ENCODE measurements at regions of chr16 and their contacts with region 1.

Region 1: DNA sequence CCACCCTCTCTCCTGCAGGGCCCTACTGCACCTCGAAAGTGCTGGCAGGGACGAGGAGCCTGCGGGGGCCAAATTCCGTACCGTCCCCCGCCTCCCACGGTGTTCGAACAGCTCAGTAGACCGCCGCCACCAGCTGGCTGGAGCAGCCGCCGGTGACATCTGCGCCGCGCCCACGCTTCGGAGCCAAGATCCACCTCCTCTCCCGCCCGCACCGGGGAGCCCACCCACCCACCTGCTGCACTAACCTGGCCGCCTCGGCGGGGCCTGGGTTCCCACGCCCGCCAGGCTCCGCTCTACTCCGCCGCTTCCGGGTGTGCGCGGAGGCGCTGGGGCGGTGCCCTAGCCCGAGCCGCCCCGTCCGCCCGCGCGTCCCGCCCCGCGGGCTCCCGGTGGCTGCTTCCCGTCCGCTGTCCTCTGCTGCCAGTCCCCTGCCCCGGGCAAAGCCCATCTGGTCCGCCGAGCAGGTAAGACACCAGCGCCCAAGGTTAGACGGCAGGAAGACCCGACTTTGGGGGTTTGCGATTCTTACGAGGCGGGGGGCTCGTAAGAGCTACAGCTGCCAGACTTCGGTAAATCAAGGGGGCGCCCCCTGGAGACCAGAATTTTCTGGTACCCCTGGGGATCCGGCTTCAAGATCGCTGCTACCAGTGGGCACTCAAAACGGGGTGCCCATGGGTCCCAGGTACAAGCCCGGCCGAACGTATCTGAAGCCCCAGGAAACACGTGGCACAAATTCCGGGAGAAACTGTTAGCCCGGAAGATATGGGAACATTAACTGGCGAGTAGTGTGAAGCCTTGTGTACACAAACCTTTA is at the starts of genes FBXL8 and TRADD:
- DNase-seq: no peak
- H3K4me3 ChIP-seq: peak within 1 kb of the TSS; percentile 62 to 83 (median 76)
- H3K27ac ChIP-seq: peak within 1 kb of the TSS; percentile 89 to 95 (median 91)
- H3K4me1 ChIP-seq: peaks cover 50 to 94% (median 56%) of the 10 kb centered on the region in 3 donors
- H3K27me3 ChIP-seq: peaks cover 0 to 31% (median 0%) of the 10 kb centered on the region in 4 donors
- CTCF ChIP-seq: peak; percentile 12 to 35 (median 32)
- POLR2A ChIP-seq: peak in 2 of 4 donors; percentile 84 to 93
- total RNA-seq, gene FBXL8: 10.0 to 34.5 (median 19.9) TPM
- total RNA-seq, gene TRADD: 27.7 to 39.8 (median 35.5) TPM

Region 2: DNA sequence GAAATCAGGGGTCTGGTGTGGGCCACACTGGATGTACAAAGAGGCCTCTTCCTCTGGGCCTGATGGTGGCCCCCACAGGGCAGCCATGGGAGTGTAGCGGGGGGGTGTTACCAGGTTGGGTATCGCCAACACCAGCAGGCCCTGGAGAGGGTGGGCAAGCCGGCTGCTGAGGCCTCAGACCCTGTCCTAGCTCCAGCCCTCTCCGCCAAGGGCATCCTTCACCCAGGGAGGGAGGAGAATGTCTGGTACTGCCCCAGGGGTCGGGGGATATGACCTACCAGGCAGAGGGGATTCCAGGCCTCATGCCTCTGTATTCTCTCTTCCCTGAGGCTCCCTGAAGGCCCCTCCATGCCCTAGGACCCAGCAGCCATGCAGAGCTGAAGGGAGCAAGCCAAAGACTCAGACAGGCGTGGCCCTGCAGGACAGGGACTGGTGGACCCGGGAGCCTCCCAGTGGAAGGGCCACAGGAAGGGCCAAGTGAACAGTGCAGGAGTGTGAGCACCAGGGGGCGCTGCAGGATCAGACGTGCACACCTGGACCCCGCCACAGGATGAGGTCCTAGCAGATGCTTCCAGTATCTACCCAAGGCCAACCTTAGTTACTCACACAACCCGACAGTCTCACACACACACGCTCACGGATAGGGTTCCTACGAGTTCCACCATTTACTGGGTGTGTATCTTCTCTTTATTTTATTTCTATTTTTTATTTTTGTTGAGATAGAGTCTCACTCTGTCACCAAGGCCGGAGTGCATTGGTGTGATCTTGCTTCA is 182.3 kb before region 1 on chr16:
- intact Hi-C with region 1: loop called (anchors 5 kb)
- DNase-seq: peak; percentile 39
- H3K4me3 ChIP-seq: no peak overlapping the region
- H3K27ac ChIP-seq: no peak overlapping the region
- H3K4me1 ChIP-seq: peaks cover 4 to 31% (median 5%) of the 10 kb centered on the region in 3 donors
- H3K27me3 ChIP-seq: peaks cover 0 to 13% (median 0%) of the 10 kb centered on the region in 4 donors
- CTCF ChIP-seq: peak; percentile 79 to 99 (median 98)
- POLR2A ChIP-seq: no peak

Region 3: GRCh38 chr16:67017810-67018488 is 141.9 kb before region 1 on chr16:
- intact Hi-C with region 1: loop called (anchors 10 kb)
- DNase-seq: no peak
- H3K4me3 ChIP-seq: no peak overlapping the region
- H3K27ac ChIP-seq: no peak overlapping the region
- H3K4me1 ChIP-seq: peaks cover 10 to 27% (median 13%) of the 10 kb centered on the region in 3 donors
- H3K27me3 ChIP-seq: peaks cover 0 to 20% (median 0%) of the 10 kb centered on the region in 4 donors
- CTCF ChIP-seq: peak; percentile 61 to 91 (median 74)
- POLR2A ChIP-seq: no peak